ENCODE measurements at regions of chr14 and their contacts with region 1.

Region 1: DNA sequence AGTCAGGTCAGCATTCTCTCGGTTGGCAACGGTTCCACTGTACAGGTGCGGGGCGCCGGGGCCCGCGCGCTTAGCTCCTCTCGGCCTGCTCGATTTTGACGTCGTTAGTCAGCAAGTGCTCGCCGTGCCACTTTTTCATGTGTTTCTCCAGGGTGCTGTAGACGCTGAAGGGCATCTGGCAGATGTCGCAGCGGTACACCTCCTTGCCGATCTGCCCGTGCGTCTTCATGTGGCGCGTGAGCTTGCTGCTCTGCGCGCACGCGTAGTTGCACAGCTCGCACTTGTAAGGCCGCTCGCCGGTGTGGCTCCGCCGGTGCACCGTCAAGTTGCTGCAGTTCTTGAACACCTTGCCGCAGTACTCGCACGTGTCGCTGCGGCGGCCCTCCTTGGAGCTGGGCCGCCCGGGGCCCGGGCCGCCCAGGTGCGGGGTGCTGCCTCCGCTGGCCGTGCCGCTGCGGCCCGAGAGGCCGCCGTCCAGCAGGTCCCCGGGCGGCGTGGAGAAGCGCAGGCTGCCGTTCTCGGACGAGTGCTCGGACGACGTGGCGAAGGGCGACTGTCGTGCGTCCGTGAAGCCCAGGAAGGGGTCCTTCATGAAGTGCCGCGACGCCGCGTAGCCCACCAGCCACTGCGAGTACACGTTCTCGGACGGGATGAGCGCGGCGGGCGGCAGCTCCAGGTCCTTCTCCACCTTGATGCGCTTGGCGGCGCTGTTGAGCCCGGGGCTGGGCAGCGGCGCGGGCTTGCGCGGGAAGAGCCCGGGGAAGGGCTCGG is 97.7 kb downstream of the BCL11B start:
- DNase-seq: peak in 1 of 2 experiments; percentile 68
- H3K4me3 ChIP-seq: no peak overlapping the region
- H3K27ac ChIP-seq: no peak overlapping the region
- H3K4me1 ChIP-seq: peaks cover 0 to 11% (median 8%) of the 10 kb centered on the region in 4 experiments; a peak in 6 of 7 replicates
- H3K27me3 ChIP-seq: no peaks in the 10 kb centered on the region
- CTCF ChIP-seq: peak; percentile 46 to 53 (median 47)
- EP300 ChIP-seq: no peak
- POLR2A ChIP-seq: no peak
- RAD21 ChIP-seq: peak; percentile 34 to 47; a peak in 3 of 4 replicates

Region 2: GRCh38 chr14:99192028-99192621 is 17.9 kb after region 1 on chr14:
- CTCF ChIA-PET with region 1: interaction called, 25 read pairs
- POLR2A ChIA-PET with region 1: interaction called, 3 read pairs
- DNase-seq: no peak
- H3K4me3 ChIP-seq: no peak overlapping the region
- H3K27ac ChIP-seq: no peak overlapping the region
- H3K4me1 ChIP-seq: peaks cover 5 to 21% (median 13%) of the 10 kb centered on the region in 4 experiments
- H3K27me3 ChIP-seq: no peaks in the 10 kb centered on the region
- CTCF ChIP-seq: no peak
- EP300 ChIP-seq: no peak
- POLR2A ChIP-seq: no peak
- RAD21 ChIP-seq: no peak